ENCODE measurements at regions of chr19 and their contacts with region 1.

Region 1: GRCh38 chr19:44570984-44571684 is 41.7 kb upstream of the CEACAM20 start:
- DNase-seq: peak; percentile 82
- ATAC-seq: peak; percentile 88
- H3K4me3 ChIP-seq: no peak overlapping the region
- H3K27ac ChIP-seq: no peak overlapping the region
- H3K4me1 ChIP-seq: peaks cover 3% of the 10 kb centered on the region; the same call in 1 of the 2 replicates
- H3K27me3 ChIP-seq: peaks cover 8% of the 10 kb centered on the region
- CTCF ChIP-seq: peak; percentile 85
- POLR2A ChIP-seq: no peak
- RAD21 ChIP-seq: peak; percentile 84

Region 2: DNA sequence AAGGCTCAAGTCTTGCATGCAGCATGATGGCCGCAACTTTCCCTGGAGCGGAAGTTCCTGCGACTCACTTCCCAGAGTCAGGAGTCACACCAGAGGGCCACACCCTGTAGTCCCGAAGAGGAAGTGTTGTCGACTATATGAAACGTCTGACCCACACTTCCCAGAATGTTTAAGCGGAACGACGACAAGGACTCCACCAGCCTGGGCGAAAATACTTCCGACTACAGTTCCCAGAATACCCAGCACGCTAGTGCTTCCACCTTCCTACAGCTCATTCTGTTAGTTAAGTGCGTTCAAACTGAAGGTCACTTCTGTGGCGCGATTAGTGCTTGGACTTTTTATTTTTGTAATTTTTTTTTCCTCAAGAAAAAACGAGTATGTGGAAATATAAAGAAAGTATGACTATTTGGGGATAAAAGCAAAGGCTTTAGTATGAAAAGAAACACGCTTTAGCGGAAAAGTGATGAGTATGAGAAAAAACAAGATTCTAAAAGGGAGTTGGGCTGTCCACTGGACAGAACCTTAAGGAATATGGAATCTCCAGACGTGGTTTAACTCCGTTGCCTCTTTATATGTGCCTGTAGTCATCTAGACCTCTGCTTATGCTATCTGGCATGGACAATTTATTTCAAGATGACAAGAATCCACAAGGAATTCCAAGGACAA is 199.2 kb before region 1 on chr19:
- CTCF ChIA-PET with region 1: no interaction called
- POLR2A ChIA-PET with region 1: no interaction called
- dilution Hi-C with region 1: no loop called
- in situ Hi-C with region 1: no loop called
- intact Hi-C with region 1: no loop called
- DNase-seq: no peak
- ATAC-seq: no peak
- H3K4me3 ChIP-seq: no peak overlapping the region
- H3K27ac ChIP-seq: no peak overlapping the region
- H3K4me1 ChIP-seq: no peaks in the 10 kb centered on the region
- H3K27me3 ChIP-seq: no peaks in the 10 kb centered on the region
- CTCF ChIP-seq: no peak
- POLR2A ChIP-seq: no peak
- RAD21 ChIP-seq: no peak

Region 3: GRCh38 chr19:44653977-44654774 is 83.0 kb after region 1 on chr19:
- CTCF ChIA-PET with region 1: interaction called, 16 read pairs
- POLR2A ChIA-PET with region 1: no interaction called
- dilution Hi-C with region 1: no loop called
- in situ Hi-C with region 1: loop called (anchors 5 kb)
- intact Hi-C with region 1: loop called (anchors 1 kb)
- DNase-seq: peak; percentile 43
- ATAC-seq: peak; percentile 35; the same call in 1 of the 2 replicates
- H3K4me3 ChIP-seq: no peak overlapping the region
- H3K27ac ChIP-seq: no peak overlapping the region
- H3K4me1 ChIP-seq: peaks cover 3% of the 10 kb centered on the region; the same call in 1 of the 2 replicates
- H3K27me3 ChIP-seq: no peaks in the 10 kb centered on the region
- CTCF ChIP-seq: peak; percentile 54
- POLR2A ChIP-seq: no peak
- RAD21 ChIP-seq: peak; percentile 53

Region 4: DNA sequence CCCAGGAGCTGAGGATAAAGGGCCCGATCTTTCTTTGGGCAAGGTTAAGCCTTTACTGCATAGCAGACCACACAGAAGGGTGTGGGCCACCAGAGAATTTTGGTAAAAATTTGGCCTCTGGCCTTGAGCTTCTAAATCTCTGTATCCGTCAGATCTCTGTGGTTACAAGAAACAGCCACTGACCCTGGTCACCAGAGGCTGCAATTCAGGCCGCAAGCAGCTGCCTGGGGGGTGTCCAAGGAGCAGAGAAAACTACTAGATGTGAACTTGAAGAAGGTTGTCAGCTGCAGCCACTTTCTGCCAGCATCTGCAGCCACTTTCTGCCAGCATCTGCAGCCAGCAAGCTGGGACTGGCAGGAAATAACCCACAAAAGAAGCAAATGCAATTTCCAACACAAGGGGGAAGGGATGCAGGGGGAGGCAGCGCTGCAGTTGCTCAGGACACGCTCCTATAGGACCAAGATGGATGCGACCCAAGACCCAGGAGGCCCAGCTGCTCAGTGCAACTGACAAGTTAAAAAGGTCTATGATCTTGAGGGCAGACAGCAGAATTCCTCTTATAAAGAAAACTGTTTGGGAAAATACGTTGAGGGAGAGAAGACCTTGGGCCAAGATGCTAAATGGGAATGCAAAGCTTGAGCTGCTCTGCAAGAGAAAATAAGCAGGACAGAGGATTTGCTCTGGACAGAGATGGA is 91.7 kb after region 1 on chr19:
- CTCF ChIA-PET with region 1: interaction called, 15 read pairs
- POLR2A ChIA-PET with region 1: no interaction called
- dilution Hi-C with region 1: no loop called
- in situ Hi-C with region 1: loop called (anchors 5 kb)
- intact Hi-C with region 1: no loop called
- DNase-seq: peak; percentile 31
- ATAC-seq: no peak
- H3K4me3 ChIP-seq: no peak overlapping the region
- H3K27ac ChIP-seq: no peak overlapping the region
- H3K4me1 ChIP-seq: no peaks in the 10 kb centered on the region
- H3K27me3 ChIP-seq: no peaks in the 10 kb centered on the region
- CTCF ChIP-seq: no peak
- POLR2A ChIP-seq: no peak
- RAD21 ChIP-seq: no peak

Region 5: DNA sequence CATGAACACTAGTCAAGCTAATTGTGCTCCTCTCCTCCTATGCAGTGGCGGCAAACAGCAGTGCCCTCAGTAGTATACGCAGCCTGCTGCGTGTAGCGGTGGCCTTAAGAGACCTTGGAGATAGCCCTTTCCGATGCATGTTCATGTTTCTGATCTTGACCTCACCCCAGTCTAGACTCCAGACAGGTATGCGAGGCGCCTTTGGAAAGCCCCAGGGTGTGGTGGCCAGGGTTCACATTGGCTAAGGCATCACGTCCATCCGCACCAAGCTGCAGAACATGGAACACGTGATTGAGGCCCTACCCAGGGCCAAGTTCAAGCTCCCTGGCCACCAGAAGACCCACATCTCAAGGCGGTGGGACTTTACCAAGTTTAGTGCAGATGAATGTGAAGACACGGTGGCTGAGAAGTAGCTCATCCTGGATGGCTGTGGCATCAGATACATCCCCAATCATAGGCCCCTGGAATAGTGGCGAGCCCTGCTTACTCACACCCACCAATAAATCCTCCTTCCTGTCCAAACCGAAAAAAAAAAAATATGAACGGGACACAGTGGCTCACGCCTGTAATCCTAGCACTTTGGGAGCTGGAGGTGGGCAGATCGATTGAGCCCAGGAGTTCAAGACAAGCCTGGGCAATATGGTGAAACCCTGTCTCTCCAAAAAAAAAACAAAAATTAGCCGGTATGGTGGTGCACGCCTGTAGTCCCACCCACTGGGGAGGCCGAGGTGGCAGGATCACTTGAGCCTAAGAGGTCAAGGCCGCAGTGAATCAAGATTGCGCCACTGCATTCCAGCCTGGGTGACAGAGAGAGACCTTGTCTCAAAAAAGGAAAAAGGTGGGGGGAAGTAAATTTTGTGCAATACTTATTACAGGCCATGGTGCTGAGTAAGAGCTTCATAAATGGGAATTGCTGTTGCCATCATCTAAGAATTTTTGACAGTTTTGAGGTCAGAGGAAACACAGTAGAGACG is 194.1 kb after region 1 on chr19:
- CTCF ChIA-PET with region 1: no interaction called
- POLR2A ChIA-PET with region 1: no interaction called
- dilution Hi-C with region 1: no loop called
- in situ Hi-C with region 1: no loop called
- intact Hi-C with region 1: loop called (anchors 5 kb)
- DNase-seq: no peak
- ATAC-seq: no peak
- H3K4me3 ChIP-seq: no peak overlapping the region
- H3K27ac ChIP-seq: no peak overlapping the region
- H3K4me1 ChIP-seq: peaks cover 3% of the 10 kb centered on the region
- H3K27me3 ChIP-seq: no peaks in the 10 kb centered on the region
- CTCF ChIP-seq: no peak
- POLR2A ChIP-seq: no peak
- RAD21 ChIP-seq: no peak

Region 6: GRCh38 chr19:44777715-44778347 is 206.7 kb after region 1 on chr19 and contains the start of gene CBLC:
- CTCF ChIA-PET with region 1: no interaction called
- POLR2A ChIA-PET with region 1: no interaction called
- dilution Hi-C with region 1: no loop called
- in situ Hi-C with region 1: loop called (anchors 25 kb)
- intact Hi-C with region 1: no loop called
- DNase-seq: no peak
- ATAC-seq: no peak
- H3K4me3 ChIP-seq: no peak within 1 kb of the TSS
- H3K27ac ChIP-seq: no peak within 1 kb of the TSS; the same call in 1 of the 2 replicates
- H3K4me1 ChIP-seq: peaks cover 12% of the 10 kb centered on the region
- H3K27me3 ChIP-seq: no peaks in the 10 kb centered on the region
- CTCF ChIP-seq: no peak
- POLR2A ChIP-seq: no peak
- RAD21 ChIP-seq: no peak
- total RNA-seq, gene CBLC: not detected in 2 replicates

Region 7: GRCh38 chr19:44808463-44809371 is 237.6 kb after region 1 on chr19 and contains the start of gene BCAM:
- CTCF ChIA-PET with region 1: no interaction called
- POLR2A ChIA-PET with region 1: no interaction called
- dilution Hi-C with region 1: no loop called
- in situ Hi-C with region 1: no loop called
- intact Hi-C with region 1: loop called (anchors 1 kb)
- DNase-seq: peak; percentile 54
- ATAC-seq: peak; percentile 89
- H3K4me3 ChIP-seq: peak within 1 kb of the TSS; percentile 80
- H3K27ac ChIP-seq: peak within 1 kb of the TSS; percentile 53
- H3K4me1 ChIP-seq: peaks cover 15% of the 10 kb centered on the region
- H3K27me3 ChIP-seq: peaks cover 5% of the 10 kb centered on the region; the same call in 1 of the 2 replicates
- CTCF ChIP-seq: no peak
- POLR2A ChIP-seq: no peak
- RAD21 ChIP-seq: no peak
- total RNA-seq, gene BCAM: 2.3 and 2.8 TPM in 2 replicates

Region 8: DNA sequence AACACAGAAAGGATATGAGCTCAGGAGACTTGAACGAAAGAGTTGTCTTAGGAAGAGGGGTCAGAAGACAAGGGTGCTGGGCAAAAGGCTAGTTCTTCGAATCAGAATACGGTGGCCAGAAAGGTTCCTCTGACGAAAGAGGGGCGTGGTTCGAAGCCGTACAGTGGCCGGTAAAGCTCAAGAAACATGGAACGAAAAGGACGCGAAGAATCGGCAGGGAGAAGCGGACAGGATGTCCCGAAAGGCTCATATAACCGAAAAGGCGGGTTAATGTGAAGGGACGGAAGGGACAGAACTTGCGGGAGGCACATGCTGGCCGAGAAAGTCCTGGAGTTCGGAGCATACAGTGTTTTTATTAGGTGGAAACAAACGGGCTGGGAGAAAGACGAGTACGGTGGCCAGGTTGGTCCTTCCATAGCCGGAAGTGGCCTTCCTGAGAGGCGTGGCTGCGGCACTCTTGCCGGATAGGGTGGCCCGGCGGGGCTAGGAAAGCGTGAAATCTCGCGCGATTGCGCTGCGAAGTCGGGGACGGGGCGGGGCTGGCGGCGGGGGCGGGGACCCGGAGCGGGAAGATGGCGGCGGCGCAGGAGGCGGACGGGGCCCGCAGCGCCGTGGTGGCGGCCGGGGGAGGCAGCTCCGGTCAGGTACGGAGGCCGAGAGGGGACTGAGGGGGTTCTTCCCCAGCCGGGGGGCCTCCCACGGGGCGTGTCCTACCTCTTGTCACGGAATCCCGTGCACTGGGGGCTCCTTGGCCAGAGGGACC is 383.9 kb after region 1 on chr19 and contains the start of gene CLPTM1:
- CTCF ChIA-PET with region 1: no interaction called
- POLR2A ChIA-PET with region 1: no interaction called
- dilution Hi-C with region 1: no loop called
- in situ Hi-C with region 1: no loop called
- intact Hi-C with region 1: loop called (anchors 10 kb)
- DNase-seq: peak; percentile 97
- ATAC-seq: peak; percentile 95
- H3K4me3 ChIP-seq: peak within 1 kb of the TSS; percentile 84
- H3K27ac ChIP-seq: peak within 1 kb of the TSS; percentile 95
- H3K4me1 ChIP-seq: peaks cover 7% of the 10 kb centered on the region
- H3K27me3 ChIP-seq: no peaks in the 10 kb centered on the region
- CTCF ChIP-seq: no peak
- POLR2A ChIP-seq: peak; percentile 80
- RAD21 ChIP-seq: no peak
- total RNA-seq, gene CLPTM1: 23.8 and 27.8 TPM in 2 replicates

Measured in IMR-90 (cell line).